ENCODE measurements at regions of chrX and their contacts with region 1.

Region 1: GRCh38 chrX:65034668-65035445 is 58.6 kb upstream of the ZC4H2 start:
- DNase-seq: peak; percentile 90
- ATAC-seq: peak; percentile 92
- H3K4me3 Mint-ChIP-seq: peak within 1 kb of the TSS; percentile 87
- H3K27ac Mint-ChIP-seq: peak within 1 kb of the TSS; percentile 85
- H3K4me1 Mint-ChIP-seq: peaks cover 17% of the 10 kb centered on the region
- H3K27me3 Mint-ChIP-seq: no peaks in the 10 kb centered on the region

Region 2: DNA sequence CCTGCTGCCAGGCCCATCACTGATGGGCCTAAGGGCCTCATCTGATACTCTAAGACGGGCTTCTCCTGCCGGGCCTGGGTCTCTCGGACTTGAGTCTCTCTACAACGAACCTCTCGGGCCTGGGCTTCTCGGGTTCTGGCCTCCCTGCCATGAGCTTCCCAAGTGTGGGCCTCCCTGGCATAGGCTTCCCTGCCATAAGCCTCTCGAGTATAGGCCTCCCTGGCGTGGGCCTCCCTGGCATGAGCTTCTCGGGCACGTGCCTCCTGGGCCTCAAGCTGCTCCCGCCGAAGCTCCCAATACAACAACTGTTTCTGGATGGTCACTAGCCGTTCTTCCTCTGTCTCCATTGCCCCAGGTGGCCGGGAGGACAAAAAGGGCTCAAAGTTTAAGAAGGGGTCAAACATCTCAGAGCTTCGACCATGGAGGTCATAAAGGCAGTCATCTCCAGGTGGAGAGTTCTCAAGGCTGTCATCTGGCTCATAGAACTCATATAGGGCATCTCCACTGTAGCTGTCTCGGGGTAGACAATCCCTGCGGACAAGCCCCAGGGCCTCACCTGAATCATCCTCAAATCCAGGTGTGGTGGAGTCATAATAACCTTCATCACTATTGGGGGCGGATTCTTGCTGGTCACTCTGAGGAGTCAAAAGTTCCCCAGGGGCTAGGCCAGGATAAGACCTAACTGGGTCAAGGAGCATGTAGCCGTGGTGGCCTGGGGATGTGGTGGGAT is 843.4 kb before region 1 on chrX:
- CTCF ChIA-PET with region 1: no interaction called
- POLR2A ChIA-PET with region 1: no interaction called
- intact Hi-C with region 1: no loop called
- DNase-seq: no peak
- ATAC-seq: no peak
- H3K4me3 Mint-ChIP-seq: no peak overlapping the region
- H3K27ac Mint-ChIP-seq: no peak overlapping the region
- H3K4me1 Mint-ChIP-seq: no peaks in the 10 kb centered on the region
- H3K27me3 Mint-ChIP-seq: no peaks in the 10 kb centered on the region

Region 3: DNA sequence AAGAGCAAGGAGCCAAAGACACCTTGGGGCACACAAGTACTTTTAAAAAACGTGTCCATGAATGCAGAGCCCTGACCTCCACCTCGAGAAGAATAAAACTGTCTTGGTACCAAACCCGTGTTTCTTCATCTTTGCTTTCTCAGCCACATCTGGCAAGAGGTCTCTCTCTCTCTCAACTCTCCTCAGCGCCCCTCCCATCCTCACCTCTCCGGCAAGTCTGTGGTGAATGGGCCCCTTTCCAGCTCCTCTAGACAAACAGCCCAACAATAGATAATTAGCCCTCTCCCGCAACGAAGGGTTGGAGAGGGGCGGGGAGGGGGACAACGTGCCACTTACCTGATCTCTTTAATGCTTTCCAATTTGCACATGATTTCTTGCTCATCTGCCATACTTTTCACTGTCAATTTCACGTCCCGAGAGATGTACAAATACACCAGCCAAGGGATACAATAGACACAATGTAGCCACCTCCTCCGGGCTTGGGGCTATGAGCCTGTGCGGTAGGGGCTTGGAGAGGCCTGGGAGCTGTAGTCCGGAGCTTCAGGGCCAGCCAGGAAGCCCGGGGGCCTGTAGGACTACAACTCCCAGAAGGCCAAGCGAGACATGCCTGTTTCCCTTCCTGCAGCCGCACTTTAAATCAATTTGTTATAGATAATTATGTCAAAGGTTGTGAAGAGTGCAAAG is 58.7 kb before region 1 on chrX and contains the start of gene ZC4H2:
- CTCF ChIA-PET with region 1: no interaction called
- POLR2A ChIA-PET with region 1: no interaction called
- intact Hi-C with region 1: loop called (anchors 1 kb)
- DNase-seq: peak; percentile 81
- ATAC-seq: peak; percentile 99
- H3K4me3 Mint-ChIP-seq: peak within 1 kb of the TSS; percentile 94
- H3K27ac Mint-ChIP-seq: peak within 1 kb of the TSS; percentile 81
- H3K4me1 Mint-ChIP-seq: peaks cover 18% of the 10 kb centered on the region
- H3K27me3 Mint-ChIP-seq: no peaks in the 10 kb centered on the region
- total RNA-seq, gene ZC4H2: 14.7 to 18.8 TPM

Region 4: GRCh38 chrX:64994131-64994798 is 40.6 kb before region 1 on chrX:
- CTCF ChIA-PET with region 1: no interaction called
- POLR2A ChIA-PET with region 1: no interaction called
- intact Hi-C with region 1: no loop called
- DNase-seq: no peak
- ATAC-seq: no peak
- H3K4me3 Mint-ChIP-seq: no peak overlapping the region
- H3K27ac Mint-ChIP-seq: no peak overlapping the region
- H3K4me1 Mint-ChIP-seq: no peaks in the 10 kb centered on the region
- H3K27me3 Mint-ChIP-seq: no peaks in the 10 kb centered on the region

Region 5: DNA sequence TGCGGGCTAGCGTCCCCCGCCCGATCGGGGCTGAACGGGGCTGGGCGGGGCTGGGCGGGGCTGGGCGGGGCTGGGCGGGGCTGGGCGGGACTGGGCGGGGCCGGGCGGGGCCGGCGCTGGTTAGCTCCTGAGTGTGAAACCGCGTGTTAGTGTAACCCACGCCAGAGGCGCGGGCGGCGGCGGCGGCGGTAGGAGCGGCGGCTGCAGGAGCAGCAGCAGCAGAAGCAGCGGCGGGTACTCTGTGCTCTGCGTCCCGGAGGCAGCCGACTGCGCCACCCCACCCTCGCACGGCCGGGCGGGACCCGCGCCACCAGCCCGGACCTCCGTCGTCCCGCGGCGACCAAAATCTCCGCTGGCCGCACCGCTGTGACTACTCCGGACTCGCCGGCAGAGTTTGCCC is 371.7 kb after region 1 on chrX:
- CTCF ChIA-PET with region 1: no interaction called
- POLR2A ChIA-PET with region 1: no interaction called
- intact Hi-C with region 1: loop called in 1 of 2 experiments (anchors 1 kb)
- DNase-seq: peak; percentile 60
- ATAC-seq: peak; percentile 61
- H3K4me3 Mint-ChIP-seq: peak overlapping the region; percentile 57
- H3K27ac Mint-ChIP-seq: no peak overlapping the region
- H3K4me1 Mint-ChIP-seq: no peaks in the 10 kb centered on the region
- H3K27me3 Mint-ChIP-seq: peaks cover 28% of the 10 kb centered on the region

Region 6: GRCh38 chrX:65534450-65535292 is 499.8 kb after region 1 on chrX and contains the start of gene LAS1L:
- CTCF ChIA-PET with region 1: no interaction called
- POLR2A ChIA-PET with region 1: no interaction called
- intact Hi-C with region 1: loop called in 1 of 2 experiments (anchors 2 kb)
- DNase-seq: peak; percentile 93
- ATAC-seq: peak; percentile 100
- H3K4me3 Mint-ChIP-seq: peak within 1 kb of the TSS; percentile 99
- H3K27ac Mint-ChIP-seq: peak within 1 kb of the TSS; percentile 96
- H3K4me1 Mint-ChIP-seq: peaks cover 19% of the 10 kb centered on the region
- H3K27me3 Mint-ChIP-seq: no peaks in the 10 kb centered on the region
- total RNA-seq, gene LAS1L: 56.4 to 64.0 TPM